OCI-LY7 (cell line): ENCODE measurements at regions of chr1 and their contacts with region 1.

Region 1: GRCh38 chr1:182604169-182605164 is at the start of gene RGS16:
- DNase-seq: peak; percentile 96
- H3K4me3 ChIP-seq: peak within 1 kb of the TSS; percentile 80
- H3K27ac ChIP-seq: peak within 1 kb of the TSS; percentile 47
- H3K4me1 ChIP-seq: peaks cover 59% of the 10 kb centered on the region
- CTCF ChIP-seq: no peak
- total RNA-seq, gene RGS16: 17.9 and 20.1 TPM in 2 replicates

Region 2: GRCh38 chr1:182614796-182615454 is 10.5 kb after region 1 on chr1:
- CTCF ChIA-PET with region 1: interaction called, 3 read pairs
- POLR2A ChIA-PET with region 1: interaction called, 52 read pairs
- intact Hi-C with region 1: loop called (anchors 1 kb)
- DNase-seq: peak; percentile 43
- H3K4me3 ChIP-seq: peak overlapping the region; percentile 61
- H3K27ac ChIP-seq: peak overlapping the region; percentile 71
- H3K4me1 ChIP-seq: peaks cover 94% of the 10 kb centered on the region
- CTCF ChIP-seq: no peak

Region 3: DNA sequence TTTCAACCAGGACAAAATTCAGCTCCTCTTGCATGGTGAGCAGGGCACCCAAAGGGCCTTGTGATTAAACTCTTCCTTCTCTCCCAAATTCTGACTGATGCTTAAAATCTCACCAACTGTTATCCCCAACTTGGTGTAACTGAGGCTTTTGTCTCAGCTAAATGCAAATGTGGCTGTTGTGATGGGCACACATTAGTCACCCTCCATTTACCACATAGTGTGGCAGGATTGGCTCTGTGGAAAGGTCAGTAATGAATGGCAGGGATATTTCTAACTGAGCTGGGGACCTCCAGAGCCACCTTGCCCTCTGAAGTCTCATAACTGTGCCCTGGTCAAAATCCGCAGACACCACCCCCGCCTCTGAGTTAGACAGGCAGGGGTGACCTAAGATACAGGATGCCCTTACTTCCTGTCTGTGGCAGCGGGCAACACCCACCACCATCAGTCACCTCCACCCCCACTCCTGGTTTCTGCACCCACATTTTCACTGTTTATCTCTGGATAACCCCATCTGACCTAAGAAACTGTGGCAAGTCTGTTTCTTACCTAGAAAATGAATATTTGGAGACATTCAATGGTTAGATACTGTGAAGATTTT is 25.1 kb after region 1 on chr1:
- CTCF ChIA-PET with region 1: interaction called, 3 read pairs
- POLR2A ChIA-PET with region 1: interaction called, 15 read pairs
- intact Hi-C with region 1: loop called (anchors 1 kb)
- DNase-seq: peak; percentile 59
- H3K4me3 ChIP-seq: peak overlapping the region; percentile 37
- H3K27ac ChIP-seq: peak overlapping the region; percentile 52
- H3K4me1 ChIP-seq: peaks cover 99% of the 10 kb centered on the region
- CTCF ChIP-seq: no peak

Region 4: GRCh38 chr1:182649041-182649440 is 44.6 kb after region 1 on chr1:
- CTCF ChIA-PET with region 1: interaction called, 4 read pairs
- POLR2A ChIA-PET with region 1: interaction called, 14 read pairs
- intact Hi-C with region 1: loop called (anchors 1 kb)
- DNase-seq: peak; percentile 45
- H3K4me3 ChIP-seq: peak overlapping the region; percentile 35
- H3K27ac ChIP-seq: peak overlapping the region; percentile 53
- H3K4me1 ChIP-seq: peaks cover 71% of the 10 kb centered on the region
- CTCF ChIP-seq: 0 out of 2 replicates have a peak, but pooled peaks have one; percentile 30

Region 5: GRCh38 chr1:182789138-182790076 is 184.9 kb after region 1 on chr1 and contains the start of gene NPL:
- CTCF ChIA-PET with region 1: interaction called, 189 read pairs
- POLR2A ChIA-PET with region 1: interaction called, 10 read pairs
- intact Hi-C with region 1: no loop called
- DNase-seq: peak; percentile 86
- H3K4me3 ChIP-seq: peak within 1 kb of the TSS; percentile 67
- H3K27ac ChIP-seq: no peak within 1 kb of the TSS
- H3K4me1 ChIP-seq: peaks cover 17% of the 10 kb centered on the region
- CTCF ChIP-seq: no peak
- total RNA-seq, gene NPL: 2.2 and 4.1 TPM in 2 replicates

Region 6: GRCh38 chr1:182910143-182910542 is 305.7 kb after region 1 on chr1:
- CTCF ChIA-PET with region 1: no interaction called
- POLR2A ChIA-PET with region 1: no interaction called
- intact Hi-C with region 1: loop called (anchors 10 kb)
- DNase-seq: no peak
- H3K4me3 ChIP-seq: no peak overlapping the region
- H3K27ac ChIP-seq: no peak overlapping the region
- H3K4me1 ChIP-seq: no peaks in the 10 kb centered on the region
- CTCF ChIP-seq: peak; percentile 29; the same call in 1 of the 2 replicates